PC-9 (cell line): ENCODE measurements at regions of chr1 and their contacts with region 1.

Region 1: DNA sequence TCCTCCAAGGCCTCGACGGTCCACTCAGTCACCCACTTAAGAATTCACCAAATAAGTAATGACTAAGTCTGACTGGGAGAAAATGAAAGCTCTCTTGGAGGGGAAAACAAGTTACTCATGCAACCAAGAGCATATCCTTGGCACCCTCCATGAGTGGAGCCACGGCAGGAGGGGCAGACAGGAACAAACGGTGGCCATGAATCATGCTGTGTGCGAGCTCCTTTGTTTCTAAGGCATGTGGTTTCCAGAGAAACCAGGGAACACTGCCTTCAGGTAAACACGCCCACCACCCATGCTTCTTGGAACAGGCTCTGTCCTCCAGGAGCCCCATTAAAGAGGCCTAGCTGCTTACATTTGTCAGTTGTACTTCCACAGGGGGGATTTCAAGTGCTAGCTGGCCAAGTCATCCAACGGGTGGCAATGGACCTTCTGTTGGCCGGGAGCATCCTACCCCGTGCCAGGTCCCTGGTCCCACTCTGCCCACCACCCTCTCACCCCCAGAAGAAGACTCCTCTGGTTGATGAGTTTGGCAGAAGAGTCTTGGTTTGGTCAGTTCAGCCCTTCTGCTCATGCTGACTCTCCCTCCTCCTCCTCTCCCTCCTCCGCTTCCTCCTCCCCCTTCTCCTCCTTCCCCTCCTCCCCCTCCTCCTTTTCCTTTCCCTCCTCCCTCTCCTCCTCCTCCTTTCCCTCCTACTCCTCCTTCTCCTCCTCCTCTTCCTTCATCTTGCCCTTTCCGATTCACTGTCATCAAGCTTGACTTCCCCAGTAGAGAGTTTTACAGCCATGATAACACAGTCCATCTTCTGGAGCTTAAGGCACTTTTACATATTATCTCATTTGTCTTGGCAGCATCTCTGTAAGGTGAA is 107.6 kb downstream of the CCDC185 start:
- DNase-seq: peak; percentile 88 to 93
- H3K4me3 ChIP-seq: no peak overlapping the region
- H3K27ac ChIP-seq: peak overlapping the region; percentile 43
- H3K4me1 ChIP-seq: peaks cover 15% of the 10 kb centered on the region
- H3K27me3 ChIP-seq: no peaks in the 10 kb centered on the region
- CTCF ChIP-seq: no peak

Region 2: DNA sequence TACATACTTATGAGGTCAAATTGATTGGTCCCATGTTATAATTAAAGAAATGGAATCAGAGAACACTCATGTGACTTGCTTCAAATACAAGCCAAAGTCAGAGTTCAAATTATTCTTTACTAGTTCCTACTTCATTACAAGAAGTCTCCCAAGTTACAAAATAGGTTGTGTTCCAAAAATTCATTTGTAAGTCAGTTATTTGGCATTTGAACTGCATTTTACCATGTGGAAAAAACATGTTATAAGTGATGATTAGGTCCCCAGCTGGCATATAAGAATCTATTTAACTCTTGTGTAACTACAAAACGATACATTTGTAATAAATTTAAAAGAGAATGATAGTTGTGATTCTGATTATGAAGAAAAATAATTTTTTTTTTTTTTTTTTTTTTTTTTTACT is 561.8 kb before region 1 on chr1:
- CTCF ChIA-PET with region 1: no interaction called
- POLR2A ChIA-PET with region 1: no interaction called
- intact Hi-C with region 1: no loop called
- DNase-seq: no peak
- H3K4me3 ChIP-seq: no peak overlapping the region
- H3K27ac ChIP-seq: no peak overlapping the region
- H3K4me1 ChIP-seq: no peaks in the 10 kb centered on the region
- H3K27me3 ChIP-seq: no peaks in the 10 kb centered on the region
- CTCF ChIP-seq: no peak

Region 3: DNA sequence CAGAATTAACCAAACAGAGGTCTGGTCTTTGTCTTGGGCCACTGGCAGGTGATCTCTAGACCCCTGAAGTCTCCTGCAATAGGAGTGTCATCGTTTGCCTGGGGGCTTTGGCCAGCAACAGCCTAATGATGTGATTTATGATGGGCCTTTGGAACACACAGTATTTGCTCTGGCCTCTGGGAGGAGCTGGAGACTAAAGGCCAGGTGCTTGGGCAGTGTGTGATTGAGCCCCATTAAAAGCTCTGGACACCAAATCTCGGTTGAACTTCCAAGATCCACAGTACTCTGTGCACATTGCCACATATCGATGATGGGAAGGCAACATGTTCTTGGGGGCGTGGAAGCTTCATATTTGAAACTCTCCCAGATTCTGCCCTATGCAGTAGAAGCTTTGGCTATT is 325.8 kb before region 1 on chr1:
- CTCF ChIA-PET with region 1: interaction called, 21 read pairs
- POLR2A ChIA-PET with region 1: no interaction called
- intact Hi-C with region 1: no loop called
- DNase-seq: no peak
- H3K4me3 ChIP-seq: no peak overlapping the region
- H3K27ac ChIP-seq: no peak overlapping the region
- H3K4me1 ChIP-seq: peaks cover 16% of the 10 kb centered on the region
- H3K27me3 ChIP-seq: no peaks in the 10 kb centered on the region
- CTCF ChIP-seq: peak; percentile 50

Region 4: DNA sequence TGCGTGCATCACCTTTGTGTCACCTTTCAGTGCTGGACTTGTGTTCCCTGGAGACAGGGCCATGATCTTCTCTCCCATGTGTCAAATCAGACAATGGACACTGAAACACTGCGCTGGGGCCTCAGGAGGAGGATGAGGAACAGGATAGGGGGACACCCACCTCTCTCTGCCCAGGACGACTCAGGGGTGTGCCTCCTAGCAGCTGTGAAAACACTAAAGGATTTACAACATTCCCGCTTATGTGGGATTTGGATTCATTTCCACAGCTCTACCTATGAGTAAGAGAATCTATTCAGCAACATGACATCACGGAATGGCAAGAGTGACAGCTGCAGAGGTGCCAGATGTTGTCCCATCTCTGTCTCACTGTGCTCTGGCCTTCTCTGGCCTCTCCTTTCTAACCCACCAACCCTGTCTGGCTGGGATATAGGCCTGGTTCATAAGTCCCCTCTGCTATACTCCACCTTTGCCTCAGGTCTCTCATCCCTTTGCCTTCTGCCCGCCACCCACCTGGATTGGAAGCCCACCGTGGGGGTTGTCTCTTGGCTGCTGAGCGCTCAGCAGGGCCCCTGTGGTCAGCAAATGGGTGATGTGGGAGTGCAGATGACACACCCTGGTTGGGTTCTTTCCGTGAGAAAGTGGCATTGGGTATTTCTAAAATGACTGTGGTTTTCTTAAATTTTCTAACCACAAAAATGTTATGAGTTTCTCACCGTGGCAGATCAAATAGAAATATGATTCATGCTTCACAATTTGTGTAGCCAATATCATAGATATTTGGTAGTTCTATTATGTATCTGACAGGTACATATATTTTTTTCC is 310.7 kb before region 1 on chr1:
- CTCF ChIA-PET with region 1: interaction called, 14 read pairs
- POLR2A ChIA-PET with region 1: no interaction called
- intact Hi-C with region 1: no loop called
- DNase-seq: peak; percentile 46 to 92
- H3K4me3 ChIP-seq: no peak overlapping the region
- H3K27ac ChIP-seq: peak overlapping the region; percentile 70
- H3K4me1 ChIP-seq: peaks cover 29% of the 10 kb centered on the region
- H3K27me3 ChIP-seq: no peaks in the 10 kb centered on the region
- CTCF ChIP-seq: no peak

Region 5: DNA sequence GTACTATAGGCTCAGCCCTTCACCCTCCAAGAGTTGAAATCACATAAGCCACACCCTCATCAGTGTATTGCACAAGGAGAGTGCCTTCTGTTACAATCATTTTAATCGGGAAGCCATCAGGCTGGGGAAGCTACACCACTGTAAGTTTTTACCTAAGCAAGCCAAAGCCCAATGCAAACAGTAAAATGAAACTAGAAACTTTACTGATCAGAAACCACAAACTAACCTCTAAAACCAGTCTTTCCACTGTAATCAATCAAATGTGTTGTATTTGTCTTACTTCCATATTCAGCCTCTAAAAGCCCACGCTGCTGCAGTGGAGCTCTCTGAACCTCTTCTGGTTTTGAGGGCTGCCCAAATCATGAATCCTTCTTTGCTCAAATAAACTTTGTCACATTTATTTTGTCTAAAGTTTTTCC is 138.5 kb after region 1 on chr1:
- CTCF ChIA-PET with region 1: no interaction called
- POLR2A ChIA-PET with region 1: no interaction called
- intact Hi-C with region 1: no loop called
- DNase-seq: peak; percentile 16 to 94
- H3K4me3 ChIP-seq: no peak overlapping the region
- H3K27ac ChIP-seq: peak overlapping the region; percentile 46
- H3K4me1 ChIP-seq: peaks cover 21% of the 10 kb centered on the region
- H3K27me3 ChIP-seq: no peaks in the 10 kb centered on the region
- CTCF ChIP-seq: no peak

Region 6: DNA sequence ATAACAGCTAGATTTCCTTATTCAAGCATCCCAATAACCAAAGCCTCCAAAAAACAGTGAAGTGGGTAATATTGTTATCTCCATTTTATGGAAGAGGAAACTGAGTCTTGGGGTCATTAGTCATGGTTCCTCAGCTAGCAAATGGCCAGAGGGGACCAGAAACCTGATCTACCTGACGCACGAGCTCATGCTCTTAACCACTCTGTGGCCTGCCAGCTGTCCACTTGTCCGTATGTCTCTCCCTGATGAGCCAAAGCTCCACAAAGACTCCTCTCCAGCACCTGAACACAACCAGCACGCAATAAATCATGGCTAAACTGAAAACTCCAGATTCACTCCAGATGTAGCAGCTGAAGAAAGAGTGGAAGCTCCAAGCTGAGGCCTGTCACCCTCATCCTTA is 158.9 kb after region 1 on chr1:
- CTCF ChIA-PET with region 1: interaction called, 12 read pairs
- POLR2A ChIA-PET with region 1: no interaction called
- intact Hi-C with region 1: no loop called
- DNase-seq: peak; percentile 32 to 76
- H3K4me3 ChIP-seq: peak overlapping the region; percentile 1; the same call in 1 of the 2 replicates
- H3K27ac ChIP-seq: peak overlapping the region; percentile 25
- H3K4me1 ChIP-seq: peaks cover 98% of the 10 kb centered on the region
- H3K27me3 ChIP-seq: no peaks in the 10 kb centered on the region
- CTCF ChIP-seq: no peak